ENCODE measurements at regions of chr6 and their contacts with region 1.

Region 1: DNA sequence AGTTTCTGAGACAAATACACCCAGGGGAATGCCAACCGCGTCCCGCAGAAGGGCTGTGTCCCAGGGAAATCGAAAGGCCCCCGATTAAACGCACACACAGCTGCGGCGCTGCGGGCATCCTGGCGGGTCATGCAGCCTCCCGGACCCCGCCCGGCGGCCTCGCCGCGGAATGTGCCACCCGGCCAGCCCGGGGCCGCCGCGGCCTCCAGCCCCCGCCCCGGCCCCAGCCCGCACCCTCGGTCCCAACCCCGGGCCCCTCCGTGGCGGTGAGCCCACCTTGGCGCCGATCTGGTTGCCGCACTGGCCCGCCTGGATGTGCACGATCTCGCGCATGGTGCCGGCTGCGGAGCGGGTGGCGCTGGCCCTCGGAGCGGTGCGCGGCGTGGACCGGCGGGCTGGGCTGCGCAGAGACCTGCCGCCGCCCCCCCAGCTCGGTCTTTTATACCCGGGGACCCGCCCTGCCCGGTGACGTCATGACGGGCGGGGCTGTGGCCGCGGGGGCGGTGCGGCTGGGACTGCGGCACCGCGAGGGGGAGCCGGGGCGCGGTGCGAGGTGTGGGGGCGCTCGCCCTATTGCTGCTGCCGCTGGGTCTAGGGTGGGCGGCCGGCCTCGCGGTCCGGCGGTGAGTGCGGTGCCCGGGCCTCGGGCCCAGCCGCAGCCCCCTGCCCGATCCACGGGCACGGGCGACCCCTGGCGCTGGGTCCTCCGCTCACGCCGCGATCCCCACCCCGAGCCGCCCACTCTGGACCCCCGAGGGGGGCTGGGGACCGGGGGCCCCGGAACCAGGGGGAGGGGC is at the start of gene TUBB2A:
- DNase-seq: peak; percentile 91
- ATAC-seq: peak; percentile 89
- H3K4me3 Mint-ChIP-seq: peak within 1 kb of the TSS; percentile 85
- H3K27ac Mint-ChIP-seq: peak within 1 kb of the TSS; percentile 83
- H3K4me1 Mint-ChIP-seq: peaks cover 31% of the 10 kb centered on the region
- H3K27me3 Mint-ChIP-seq: peaks cover 3% of the 10 kb centered on the region
- CTCF ChIP-seq: no peak
- total RNA-seq, gene TUBB2A: 3.3 TPM in 2 replicates

Region 2: GRCh38 chr6:1832836-1833787 is 1324.2 kb before region 1 on chr6:
- CTCF ChIA-PET with region 1: no interaction called
- POLR2A ChIA-PET with region 1: no interaction called
- intact Hi-C with region 1: no loop called
- DNase-seq: no peak
- ATAC-seq: no peak
- H3K4me3 Mint-ChIP-seq: no peak overlapping the region
- H3K27ac Mint-ChIP-seq: no peak overlapping the region
- H3K4me1 Mint-ChIP-seq: no peaks in the 10 kb centered on the region
- H3K27me3 Mint-ChIP-seq: no peaks in the 10 kb centered on the region
- CTCF ChIP-seq: no peak

Region 3: GRCh38 chr6:2921520-2922115 is 235.7 kb before region 1 on chr6:
- CTCF ChIA-PET with region 1: no interaction called
- POLR2A ChIA-PET with region 1: no interaction called
- intact Hi-C with region 1: no loop called
- DNase-seq: no peak
- ATAC-seq: no peak
- H3K4me3 Mint-ChIP-seq: no peak overlapping the region
- H3K27ac Mint-ChIP-seq: no peak overlapping the region
- H3K4me1 Mint-ChIP-seq: no peaks in the 10 kb centered on the region
- H3K27me3 Mint-ChIP-seq: no peaks in the 10 kb centered on the region
- CTCF ChIP-seq: no peak

Region 4: DNA sequence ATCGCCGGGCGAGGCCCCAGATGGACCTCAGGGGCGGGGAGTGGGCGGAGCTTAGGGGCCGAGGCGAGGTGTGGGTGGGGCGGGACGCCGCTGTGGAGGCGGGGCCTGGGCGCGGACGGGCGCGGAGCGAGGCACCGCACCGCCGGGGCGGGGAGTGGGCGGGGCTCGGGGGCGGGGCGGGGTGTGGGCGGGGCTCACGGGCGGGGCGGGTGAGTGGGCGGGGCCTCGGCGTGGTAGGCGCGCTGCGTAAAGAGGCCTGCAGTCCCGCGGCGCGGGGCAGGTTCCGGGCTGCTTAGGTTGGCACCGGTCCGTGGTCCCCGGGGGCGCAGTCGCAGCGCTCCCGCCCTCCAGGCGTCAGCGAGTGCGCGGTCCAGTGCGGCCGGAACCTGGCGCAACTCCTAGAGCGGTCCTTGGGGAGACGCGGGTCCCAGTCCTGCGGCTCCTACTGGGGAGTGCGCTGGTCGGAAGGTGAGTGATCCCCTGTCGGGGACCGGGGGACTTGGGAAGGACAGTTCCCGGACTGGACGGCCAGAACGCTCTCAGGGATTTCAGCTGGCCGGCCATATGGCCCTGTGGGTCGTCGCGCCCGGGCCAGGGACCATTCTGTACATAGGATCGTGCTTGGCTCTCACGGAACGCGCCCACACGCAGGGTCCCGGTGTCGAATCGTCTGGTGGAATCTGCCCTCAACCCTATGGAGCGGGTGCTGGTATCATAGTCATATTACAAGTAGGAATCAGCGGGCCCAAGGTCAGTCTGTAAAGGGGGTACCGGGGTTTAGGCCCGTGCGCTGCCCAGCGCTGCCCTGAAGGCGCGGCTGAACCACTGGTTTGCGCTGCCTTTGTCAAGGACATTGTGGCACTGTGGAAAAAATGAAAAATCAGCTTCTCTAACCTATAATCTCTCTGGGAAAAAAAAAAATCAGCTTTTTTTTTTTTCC is 157.4 kb before region 1 on chr6 and contains the start of gene NQO2:
- CTCF ChIA-PET with region 1: no interaction called
- POLR2A ChIA-PET with region 1: no interaction called
- intact Hi-C with region 1: loop called (anchors 1 kb)
- DNase-seq: peak; percentile 91
- ATAC-seq: peak; percentile 88
- H3K4me3 Mint-ChIP-seq: peak within 1 kb of the TSS; percentile 90
- H3K27ac Mint-ChIP-seq: peak within 1 kb of the TSS; percentile 80
- H3K4me1 Mint-ChIP-seq: peaks cover 16% of the 10 kb centered on the region
- H3K27me3 Mint-ChIP-seq: no peaks in the 10 kb centered on the region
- CTCF ChIP-seq: no peak
- total RNA-seq, gene NQO2: 11.9 and 12.3 TPM in 2 replicates

Region 5: GRCh38 chr6:3125815-3126214 is 31.5 kb before region 1 on chr6:
- CTCF ChIA-PET with region 1: interaction called, 3 read pairs
- POLR2A ChIA-PET with region 1: no interaction called
- intact Hi-C with region 1: loop called (anchors 2 kb)
- DNase-seq: no peak
- ATAC-seq: no peak
- H3K4me3 Mint-ChIP-seq: no peak overlapping the region
- H3K27ac Mint-ChIP-seq: no peak overlapping the region
- H3K4me1 Mint-ChIP-seq: peaks cover 8% of the 10 kb centered on the region
- H3K27me3 Mint-ChIP-seq: no peaks in the 10 kb centered on the region
- CTCF ChIP-seq: no peak

Region 6: DNA sequence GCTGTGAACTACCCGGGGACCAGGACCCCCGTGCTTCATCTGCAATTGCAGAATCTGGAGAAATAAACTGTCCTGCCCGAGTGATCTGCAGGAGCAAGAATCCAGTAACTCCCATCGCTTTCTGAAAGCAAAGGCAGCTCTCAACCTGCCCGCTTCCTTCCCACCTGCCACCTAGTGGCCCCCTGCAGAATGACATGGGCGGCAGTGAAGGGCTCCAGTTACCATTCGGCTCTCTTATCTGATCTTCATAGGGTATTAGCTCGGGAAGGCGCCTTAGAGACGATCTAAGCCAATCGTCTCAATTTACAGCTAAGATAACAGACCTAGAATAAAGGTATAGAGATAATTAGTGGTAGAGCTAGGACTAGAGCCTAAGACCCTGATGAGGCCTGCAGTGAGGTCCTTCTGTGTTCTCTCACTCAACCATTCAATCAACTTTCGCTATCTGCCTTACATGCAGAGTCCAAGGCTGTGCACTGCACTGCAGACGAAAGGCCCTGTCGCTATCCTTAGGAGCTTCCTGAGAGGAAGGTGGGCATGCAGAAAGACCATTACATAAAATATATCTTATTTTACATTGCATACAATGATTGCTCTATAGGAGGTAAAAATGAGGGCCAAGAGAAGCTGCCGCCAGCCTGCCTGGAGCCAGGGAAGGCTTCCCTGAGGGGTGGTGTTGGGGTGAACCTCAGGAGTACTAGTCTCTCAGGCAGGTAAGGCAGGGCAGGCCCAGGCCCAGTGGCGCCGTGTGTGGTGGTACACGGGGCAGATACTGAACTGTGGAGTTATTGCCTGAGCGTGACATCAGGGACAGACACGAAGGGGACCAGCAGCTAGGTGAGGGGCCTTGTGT is 94.4 kb after region 1 on chr6:
- CTCF ChIA-PET with region 1: interaction called, 5 read pairs
- POLR2A ChIA-PET with region 1: no interaction called
- intact Hi-C with region 1: loop called (anchors 1 kb)
- DNase-seq: peak; percentile 68
- ATAC-seq: peak; percentile 100
- H3K4me3 Mint-ChIP-seq: peak overlapping the region; percentile 64
- H3K27ac Mint-ChIP-seq: peak overlapping the region; percentile 21
- H3K4me1 Mint-ChIP-seq: peaks cover 6% of the 10 kb centered on the region
- H3K27me3 Mint-ChIP-seq: peaks cover 30% of the 10 kb centered on the region
- CTCF ChIP-seq: peak; percentile 91

Region 7: DNA sequence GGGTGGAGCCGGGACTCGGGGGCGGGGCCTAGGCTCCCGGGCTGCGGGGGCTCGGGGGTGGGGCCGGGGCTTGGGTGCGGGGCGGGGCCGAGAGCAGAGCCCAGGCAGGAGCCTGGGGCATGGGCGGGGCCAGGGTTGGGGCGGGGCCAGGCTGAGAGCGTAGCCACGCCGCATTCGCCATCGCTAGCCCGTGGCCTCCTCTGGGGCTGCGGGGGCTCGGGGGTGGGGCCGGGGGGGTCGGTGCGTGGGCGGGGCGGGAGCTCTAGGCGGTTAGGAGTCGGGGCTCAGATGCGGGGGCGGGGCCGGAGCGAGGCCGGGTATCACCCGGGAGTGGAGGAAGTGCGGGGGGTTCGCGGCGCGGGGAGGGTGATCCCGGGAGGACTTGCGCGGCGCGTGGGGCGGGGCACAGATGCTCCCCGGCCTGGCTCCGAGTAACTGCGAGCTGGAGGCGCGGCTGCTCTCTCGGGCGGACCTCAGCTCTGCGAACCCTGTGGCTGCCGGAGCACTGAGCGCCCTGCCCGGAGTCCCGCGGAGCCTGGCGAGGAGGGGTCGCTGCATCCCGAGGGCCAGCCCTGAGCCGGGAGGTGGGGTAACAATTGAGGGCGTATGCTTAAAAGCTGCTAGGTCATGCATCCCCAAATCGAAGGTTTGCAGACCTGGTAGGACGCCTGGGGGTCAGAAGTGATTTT is 978.5 kb after region 1 on chr6:
- CTCF ChIA-PET with region 1: no interaction called
- POLR2A ChIA-PET with region 1: no interaction called
- intact Hi-C with region 1: loop called (anchors 2 kb)
- DNase-seq: peak; percentile 83
- ATAC-seq: peak; percentile 92
- H3K4me3 Mint-ChIP-seq: peak overlapping the region; percentile 85
- H3K27ac Mint-ChIP-seq: peak overlapping the region; percentile 76
- H3K4me1 Mint-ChIP-seq: peaks cover 27% of the 10 kb centered on the region
- H3K27me3 Mint-ChIP-seq: no peaks in the 10 kb centered on the region
- CTCF ChIP-seq: no peak